HEK293 (cell line): ENCODE measurements at regions of chr11 and their contacts with region 1.

Region 1: DNA sequence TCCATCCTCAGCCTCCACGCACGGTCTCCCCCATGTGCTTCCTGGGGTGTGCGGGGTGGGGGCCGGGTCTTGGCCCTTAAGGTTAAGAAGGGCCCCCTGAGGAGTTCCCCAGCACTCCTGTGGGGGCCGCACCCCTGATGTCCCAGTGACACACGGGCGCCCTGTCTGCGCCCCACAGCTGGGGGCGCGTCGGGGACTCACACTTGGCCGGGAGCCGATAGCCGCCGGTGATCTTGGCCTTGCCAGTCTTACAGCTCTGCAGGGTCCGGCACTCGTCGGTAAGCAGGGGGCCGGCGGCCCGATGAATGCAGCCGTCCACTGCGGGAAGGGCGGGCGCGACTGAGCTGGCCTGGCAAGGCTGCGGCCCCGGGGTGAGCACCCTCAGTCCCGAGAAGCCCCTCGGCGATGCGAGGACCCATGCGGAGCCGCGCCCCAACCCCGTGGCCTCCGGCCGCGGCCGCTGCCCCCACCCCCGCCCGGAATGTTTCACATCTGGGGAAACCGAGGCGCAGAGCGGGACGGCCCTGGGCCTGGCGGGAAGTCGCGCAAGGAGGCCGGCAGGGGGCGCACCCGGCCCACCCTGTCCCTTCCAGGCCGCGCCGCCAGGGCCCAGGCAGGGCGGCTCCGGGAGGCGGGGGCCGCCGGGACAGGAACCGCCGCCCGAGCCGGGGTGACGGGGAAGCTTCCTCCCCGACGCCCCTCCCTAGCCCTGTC is 13.9 kb downstream of the OTUB1 start:
- H3K4me3 ChIP-seq: no peak overlapping the region
- H3K27ac ChIP-seq: peak overlapping the region; percentile 16; the same call in 1 of the 2 replicates
- H3K4me1 ChIP-seq: no peaks in the 10 kb centered on the region
- CTCF ChIP-seq: no peak

Region 2: GRCh38 chr11:63146581-63146980 is 853.6 kb before region 1 on chr11:
- CTCF ChIA-PET with region 1: no interaction called
- POLR2A ChIA-PET with region 1: no interaction called
- H3K4me3 ChIP-seq: no peak overlapping the region
- H3K27ac ChIP-seq: no peak overlapping the region
- H3K4me1 ChIP-seq: no peaks in the 10 kb centered on the region
- CTCF ChIP-seq: no peak

Region 3: DNA sequence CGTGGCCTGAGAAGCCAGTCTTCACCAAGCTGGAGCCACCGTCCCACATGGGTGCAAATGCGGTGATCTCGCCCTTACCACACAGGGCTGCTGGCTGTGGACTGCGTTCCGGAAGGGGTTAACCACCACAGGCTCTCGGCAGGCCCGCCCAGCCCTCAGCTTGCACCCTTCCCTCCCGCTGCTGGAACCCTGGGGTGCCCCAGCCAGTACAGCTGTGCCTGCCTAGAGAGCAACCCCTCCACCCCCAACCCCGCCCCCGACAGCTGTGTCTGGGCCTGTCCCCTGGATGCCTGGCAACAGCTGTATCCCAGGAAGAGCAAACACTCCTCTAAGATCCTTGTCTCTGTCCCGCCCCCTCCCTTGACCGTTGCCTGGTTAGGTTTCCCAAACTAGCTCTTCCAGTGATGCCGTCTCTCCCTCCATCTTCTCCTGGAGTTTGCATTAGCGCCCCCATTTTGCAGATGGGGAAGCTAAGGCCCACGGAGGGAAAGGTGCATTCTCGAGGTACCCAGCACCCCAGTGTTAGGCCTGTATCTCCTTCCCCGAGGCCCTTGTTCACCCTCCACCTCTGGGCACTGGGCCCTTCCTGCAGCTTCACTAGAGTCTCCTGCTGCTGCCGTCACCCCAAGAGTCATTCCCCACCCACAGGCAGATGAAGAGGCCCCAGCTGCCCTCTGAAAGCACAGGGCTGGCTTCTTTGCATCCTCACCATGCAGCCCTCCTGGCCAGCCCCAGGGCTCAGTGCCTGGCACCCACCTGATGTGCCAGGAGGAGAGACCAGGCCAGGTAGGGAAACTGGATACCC is 38.4 kb before region 1 on chr11:
- CTCF ChIA-PET with region 1: interaction called, 10 read pairs
- POLR2A ChIA-PET with region 1: no interaction called
- H3K4me3 ChIP-seq: no peak overlapping the region
- H3K27ac ChIP-seq: no peak overlapping the region
- H3K4me1 ChIP-seq: no peaks in the 10 kb centered on the region
- CTCF ChIP-seq: no peak

Region 4: GRCh38 chr11:63986932-63987513 is 13.2 kb before region 1 on chr11:
- CTCF ChIA-PET with region 1: interaction called, 3 read pairs
- POLR2A ChIA-PET with region 1: interaction called, 18 read pairs
- H3K4me3 ChIP-seq: peak overlapping the region; percentile 95
- H3K27ac ChIP-seq: peak overlapping the region; percentile 76
- H3K4me1 ChIP-seq: 0 out of 2 replicates have a peak, but pooled peaks cover 2% of the 10 kb centered on the region
- CTCF ChIP-seq: no peak

Region 5: DNA sequence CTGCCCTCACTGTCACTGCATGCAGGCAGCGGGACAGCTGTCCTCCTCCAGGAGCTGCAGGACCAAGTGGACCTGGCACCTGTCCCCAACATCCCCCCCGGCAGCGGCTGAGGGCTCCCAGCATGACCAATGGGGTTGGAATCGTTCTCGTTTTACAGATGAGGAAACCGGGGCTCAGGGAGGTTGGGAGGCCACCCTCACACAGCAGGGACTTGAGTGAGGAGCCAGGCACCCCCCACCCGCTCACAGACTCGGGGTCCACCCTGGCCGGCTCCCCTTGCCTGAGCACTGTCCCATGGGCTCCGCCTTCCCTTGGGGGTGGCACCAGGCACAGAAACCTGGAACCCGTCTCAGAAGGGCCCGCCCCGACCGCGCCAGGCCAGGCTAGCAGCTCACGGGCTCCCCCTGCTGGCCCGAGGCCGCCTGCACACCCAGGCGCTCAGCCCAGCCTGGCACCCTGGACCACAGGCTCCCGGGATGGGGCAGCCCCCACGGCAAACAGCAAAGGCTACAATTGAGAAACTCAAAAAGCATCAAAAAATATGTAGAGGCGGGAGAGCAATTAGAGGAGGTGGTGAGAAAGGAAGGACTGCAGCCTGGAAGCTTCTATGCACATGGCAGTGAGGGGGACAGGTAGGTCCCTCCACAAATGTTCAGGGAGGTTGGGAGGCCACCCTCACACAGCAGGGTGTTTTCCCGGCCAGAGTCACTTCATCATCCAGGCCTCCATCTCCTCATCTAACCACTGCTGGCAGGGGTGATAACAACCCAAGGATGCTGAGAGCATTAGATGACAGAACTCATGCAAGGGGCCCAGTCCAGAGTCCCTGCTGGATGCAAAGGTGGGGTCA is 152.9 kb after region 1 on chr11:
- CTCF ChIA-PET with region 1: interaction called, 70 read pairs
- POLR2A ChIA-PET with region 1: interaction called, 3 read pairs
- H3K4me3 ChIP-seq: no peak overlapping the region
- H3K27ac ChIP-seq: no peak overlapping the region
- H3K4me1 ChIP-seq: no peaks in the 10 kb centered on the region
- CTCF ChIP-seq: peak; percentile 83

Region 6: DNA sequence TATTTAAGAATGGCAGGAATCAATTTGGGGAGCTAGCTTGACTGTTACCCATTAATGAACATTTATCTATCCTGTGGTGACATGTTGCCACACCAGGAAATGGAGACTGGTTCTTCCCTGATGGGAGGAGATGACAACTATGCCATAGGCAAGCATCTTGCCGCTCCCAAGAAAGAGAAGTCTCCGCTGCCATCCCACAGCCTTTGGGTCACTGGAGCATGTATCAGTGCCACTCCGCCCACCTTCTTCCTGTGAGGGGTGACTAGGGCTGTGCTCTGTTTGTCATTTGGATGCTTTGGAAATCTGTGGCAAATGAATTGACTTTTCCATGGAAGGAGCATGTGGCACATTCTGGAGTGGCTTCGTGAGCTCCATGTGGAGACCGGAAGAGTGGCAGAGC is 192.3 kb after region 1 on chr11:
- CTCF ChIA-PET with region 1: no interaction called
- POLR2A ChIA-PET with region 1: no interaction called
- H3K4me3 ChIP-seq: no peak overlapping the region
- H3K27ac ChIP-seq: no peak overlapping the region
- H3K4me1 ChIP-seq: peaks cover 3% of the 10 kb centered on the region; the same call in 1 of the 2 replicates
- CTCF ChIP-seq: no peak